ENCODE measurements at regions of chr1 and their contacts with region 1.

Region 1: GRCh38 chr1:156445789-156446263 is 54.7 kb downstream of the MEF2D start:
- DNase-seq: no peak
- H3K4me3 ChIP-seq: no peak overlapping the region
- H3K27ac ChIP-seq: no peak overlapping the region
- H3K4me1 ChIP-seq: peaks cover 5 to 7% (median 6%) of the 10 kb centered on the region in 4 donors
- H3K27me3 ChIP-seq: peaks cover 0 to 47% (median 6%) of the 10 kb centered on the region in 4 donors
- CTCF ChIP-seq: peak in 2 of 3 experiments; percentile 96 to 98
- EP300 ChIP-seq: no peak
- POLR2A ChIP-seq: no peak

Region 2: DNA sequence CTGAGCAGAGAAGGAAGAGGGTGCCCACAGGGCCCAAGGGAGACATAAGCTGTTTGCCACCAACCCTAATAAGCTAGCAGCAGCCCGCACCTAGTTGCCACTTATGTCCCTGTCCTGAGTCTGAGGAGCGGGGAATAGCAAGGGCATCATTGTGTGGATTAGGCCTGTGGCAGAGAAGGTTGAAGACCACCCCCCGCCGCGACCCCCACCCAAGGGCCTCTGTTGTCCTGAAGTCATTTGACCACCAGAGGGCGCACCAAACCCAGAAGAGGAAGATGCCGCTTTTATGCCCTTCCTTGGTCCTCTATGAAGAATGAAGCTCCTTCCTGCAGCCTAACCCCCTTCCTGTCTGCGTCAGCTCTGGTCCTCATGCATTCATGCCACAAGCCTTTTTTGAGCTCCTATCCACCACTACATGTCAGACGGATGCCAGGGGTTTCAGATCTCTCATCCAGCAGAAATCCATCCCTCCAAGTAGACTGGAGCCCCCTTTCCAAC is 60.2 kb before region 1 on chr1:
- intact Hi-C with region 1: loop called (anchors 1 kb)
- DNase-seq: no peak
- H3K4me3 ChIP-seq: no peak overlapping the region
- H3K27ac ChIP-seq: no peak overlapping the region
- H3K4me1 ChIP-seq: peaks cover 0 to 16% (median 11%) of the 10 kb centered on the region in 4 donors
- H3K27me3 ChIP-seq: peaks cover 0 to 56% (median 20%) of the 10 kb centered on the region in 4 donors
- CTCF ChIP-seq: peak; percentile 86 to 95 (median 89)
- EP300 ChIP-seq: no peak
- POLR2A ChIP-seq: no peak

Region 3: DNA sequence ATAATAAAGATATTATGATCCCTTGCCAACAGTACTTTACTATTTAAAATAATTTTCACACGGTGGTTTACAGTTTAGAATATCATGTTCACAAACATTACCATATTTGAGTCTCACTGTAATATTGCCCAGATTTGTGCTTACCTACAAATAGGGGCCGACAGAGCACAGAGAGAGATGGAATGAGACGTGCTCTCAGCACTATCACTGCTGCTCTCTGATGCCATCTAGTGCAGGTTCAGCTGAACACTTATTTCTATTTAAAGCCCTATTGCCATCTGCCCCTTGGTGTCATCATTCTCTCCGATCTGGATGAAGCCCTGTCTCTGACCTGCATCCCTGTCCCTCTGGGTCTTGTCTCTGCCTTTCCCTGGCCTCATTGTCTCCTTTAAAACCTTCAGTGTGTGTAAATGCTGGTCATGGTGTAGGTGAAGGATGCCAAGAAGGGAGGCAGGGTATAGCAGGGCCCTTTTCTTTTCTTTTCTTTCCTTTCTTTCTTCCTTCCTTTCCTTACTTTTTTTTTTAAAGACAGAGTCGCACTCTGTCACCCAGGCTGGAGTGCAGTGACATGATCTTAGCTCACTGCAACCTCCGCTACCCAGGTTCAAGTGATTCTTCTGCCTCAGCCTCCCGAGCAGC is 162.3 kb after region 1 on chr1:
- intact Hi-C with region 1: loop called (anchors 2 kb)
- DNase-seq: no peak
- H3K4me3 ChIP-seq: no peak overlapping the region
- H3K27ac ChIP-seq: peak overlapping the region in 1 of 4 donors; percentile 64
- H3K4me1 ChIP-seq: peaks cover 0 to 15% (median 8%) of the 10 kb centered on the region in 4 donors
- H3K27me3 ChIP-seq: no peaks in the 10 kb centered on the region
- CTCF ChIP-seq: peak; percentile 63 to 88 (median 85)
- EP300 ChIP-seq: no peak
- POLR2A ChIP-seq: no peak

Measured in esophagus muscularis mucosa (tissue), 4 donors.